Activated CD4-positive, alpha-beta T cell treated with anti-CD3 and anti-CD28 coated beads for 36 hours (primary cell): ENCODE measurements at regions of chr14 and their contacts with region 1.

Region 1: DNA sequence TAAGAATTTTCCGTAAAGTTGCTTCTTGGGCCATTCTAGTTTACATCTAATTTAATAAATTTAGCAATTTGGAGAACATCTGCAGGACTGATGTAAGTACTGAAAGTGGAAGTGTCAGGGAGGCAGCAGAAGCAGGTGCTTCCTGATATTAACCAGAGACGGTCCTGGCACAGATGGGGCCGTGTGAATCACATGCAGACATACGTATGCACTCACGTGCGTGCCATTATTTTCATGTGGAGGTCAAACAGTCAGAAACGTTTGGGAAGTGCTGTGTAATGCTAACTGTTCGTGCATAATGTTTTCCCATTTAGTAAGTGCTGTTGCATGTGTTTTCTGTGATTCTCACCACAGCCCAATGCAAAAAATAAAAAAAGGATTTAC is 87.8 kb upstream of the DYNC1H1 start:
- DNase-seq: peak; percentile 86
- ATAC-seq: peak; percentile 62
- H3K4me3 Mint-ChIP-seq: peak overlapping the region; percentile 66
- H3K27ac Mint-ChIP-seq: peak overlapping the region; percentile 94
- H3K4me1 Mint-ChIP-seq: peaks cover 91% of the 10 kb centered on the region
- H3K27me3 Mint-ChIP-seq: no peaks in the 10 kb centered on the region

Region 2: GRCh38 chr14:101721951-101722661 is 154.4 kb before region 1 on chr14:
- CTCF ChIA-PET with region 1: no interaction called
- POLR2A ChIA-PET with region 1: no interaction called
- intact Hi-C with region 1: loop called in 1 of 2 experiments (anchors 1 kb)
- DNase-seq: peak; percentile 78
- ATAC-seq: peak; percentile 90
- H3K4me3 Mint-ChIP-seq: peak overlapping the region; percentile 74
- H3K27ac Mint-ChIP-seq: peak overlapping the region; percentile 99
- H3K4me1 Mint-ChIP-seq: peaks cover 48% of the 10 kb centered on the region
- H3K27me3 Mint-ChIP-seq: no peaks in the 10 kb centered on the region

Region 3: GRCh38 chr14:101767618-101768362 is 108.8 kb before region 1 on chr14:
- CTCF ChIA-PET with region 1: interaction called, 15 read pairs
- POLR2A ChIA-PET with region 1: interaction called, 4 read pairs
- intact Hi-C with region 1: loop called in 1 of 2 experiments (anchors 5 kb)
- DNase-seq: no peak
- ATAC-seq: no peak
- H3K4me3 Mint-ChIP-seq: no peak overlapping the region
- H3K27ac Mint-ChIP-seq: no peak overlapping the region
- H3K4me1 Mint-ChIP-seq: peaks cover 42% of the 10 kb centered on the region
- H3K27me3 Mint-ChIP-seq: no peaks in the 10 kb centered on the region

Region 4: GRCh38 chr14:101809671-101810514 is 66.7 kb before region 1 on chr14:
- CTCF ChIA-PET with region 1: interaction called, 7 read pairs
- POLR2A ChIA-PET with region 1: interaction called, 23 read pairs
- intact Hi-C with region 1: no loop called
- DNase-seq: peak; percentile 90
- ATAC-seq: peak; percentile 86
- H3K4me3 Mint-ChIP-seq: peak overlapping the region; percentile 97
- H3K27ac Mint-ChIP-seq: peak overlapping the region; percentile 99
- H3K4me1 Mint-ChIP-seq: peaks cover 49% of the 10 kb centered on the region
- H3K27me3 Mint-ChIP-seq: no peaks in the 10 kb centered on the region

Region 5: GRCh38 chr14:101854366-101854765 is 22.2 kb before region 1 on chr14:
- CTCF ChIA-PET with region 1: interaction called, 7 read pairs
- POLR2A ChIA-PET with region 1: no interaction called
- intact Hi-C with region 1: loop called (anchors 1 to 2 kb)
- DNase-seq: no peak
- ATAC-seq: peak; percentile 84
- H3K4me3 Mint-ChIP-seq: peak overlapping the region; percentile 8
- H3K27ac Mint-ChIP-seq: peak overlapping the region; percentile 88
- H3K4me1 Mint-ChIP-seq: peaks cover 87% of the 10 kb centered on the region
- H3K27me3 Mint-ChIP-seq: no peaks in the 10 kb centered on the region

Region 6: GRCh38 chr14:102187058-102187457 is 310.5 kb after region 1 on chr14:
- CTCF ChIA-PET with region 1: no interaction called
- POLR2A ChIA-PET with region 1: no interaction called
- intact Hi-C with region 1: loop called in 1 of 2 experiments (anchors 5 kb)
- DNase-seq: no peak
- ATAC-seq: no peak
- H3K4me3 Mint-ChIP-seq: no peak overlapping the region
- H3K27ac Mint-ChIP-seq: peak overlapping the region; percentile 79
- H3K4me1 Mint-ChIP-seq: peaks cover 61% of the 10 kb centered on the region
- H3K27me3 Mint-ChIP-seq: no peaks in the 10 kb centered on the region